ENCODE measurements at regions of chr6 and their contacts with region 1.

Region 1: GRCh38 chr6:137094411-137095008 is 49.7 kb upstream of the IL20RA start:
- DNase-seq: peak; percentile 12
- H3K4me3 ChIP-seq: no peak overlapping the region
- CTCF ChIP-seq: peak; percentile 55

Region 2: DNA sequence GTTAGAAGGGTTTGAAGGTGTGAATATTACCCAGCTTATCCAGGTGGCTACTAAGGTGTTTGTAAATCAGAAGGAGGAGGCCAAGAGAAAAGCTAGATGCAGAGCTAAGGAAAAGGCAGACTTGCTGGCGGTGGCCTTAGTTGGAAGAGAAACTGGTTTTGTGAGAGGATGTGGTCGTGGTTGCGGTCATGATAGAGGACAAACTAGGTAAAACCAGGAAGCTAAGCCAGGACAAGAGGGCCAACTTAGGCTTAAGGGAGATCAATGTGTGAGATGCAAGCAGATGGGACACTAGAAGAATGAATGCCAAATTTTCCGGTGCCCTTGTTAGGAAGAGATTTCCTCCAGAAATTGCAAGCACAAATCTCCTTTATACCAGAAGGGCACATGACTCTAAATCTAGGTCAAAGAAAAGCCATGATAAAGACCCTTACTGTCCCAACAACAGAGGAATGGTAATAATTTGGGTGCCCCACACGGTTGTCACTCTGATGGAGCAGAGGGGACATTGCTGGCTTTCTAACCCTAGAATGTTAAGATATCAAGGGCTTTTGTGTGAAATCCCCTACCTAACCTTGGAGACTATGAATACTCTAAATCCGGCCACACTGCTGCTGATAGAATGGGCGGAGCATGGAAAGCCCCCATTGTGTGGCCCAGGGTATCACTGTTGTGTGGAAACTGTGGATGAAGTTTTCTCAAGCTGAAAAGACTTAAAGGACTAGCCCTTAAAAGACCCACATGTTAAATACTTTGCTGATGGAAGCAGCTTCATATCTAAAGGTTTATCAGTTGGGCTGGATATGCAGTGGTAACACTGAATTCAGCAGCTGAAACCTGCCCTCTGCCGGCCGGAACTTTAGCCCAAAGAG is 71.1 kb after region 1 on chr6:
- CTCF ChIA-PET with region 1: interaction called, 11 read pairs
- POLR2A ChIA-PET with region 1: no interaction called
- DNase-seq: no peak
- H3K4me3 ChIP-seq: no peak overlapping the region
- CTCF ChIP-seq: no peak

Region 3: GRCh38 chr6:137415127-137415833 is 320.8 kb after region 1 on chr6:
- CTCF ChIA-PET with region 1: interaction called, 17 read pairs
- POLR2A ChIA-PET with region 1: no interaction called
- DNase-seq: no peak
- H3K4me3 ChIP-seq: peak overlapping the region; percentile 51
- CTCF ChIP-seq: peak; percentile 62

Region 4: GRCh38 chr6:137638926-137639706 is 544.6 kb after region 1 on chr6:
- CTCF ChIA-PET with region 1: interaction called, 11 read pairs
- POLR2A ChIA-PET with region 1: no interaction called
- DNase-seq: no peak
- H3K4me3 ChIP-seq: no peak overlapping the region
- CTCF ChIP-seq: no peak

Measured in AG04449 (cell line).